Ovary (tissue), 10 donors: ENCODE measurements at regions of chr5 and their contacts with region 1.

Region 1: GRCh38 chr5:132820162-132820754 is 7.2 kb downstream of the SOWAHA start:
- DNase-seq: peak; percentile 80 to 90 (median 87)
- H3K4me3 ChIP-seq: no peak overlapping the region
- H3K27ac ChIP-seq: no peak overlapping the region
- H3K4me1 ChIP-seq: peaks cover 8% of the 10 kb centered on the region
- H3K27me3 ChIP-seq: no peaks in the 10 kb centered on the region
- CTCF ChIP-seq: peak; percentile 48 to 68 (median 65)
- EP300 ChIP-seq: no peak
- POLR2A ChIP-seq: no peak

Region 2: GRCh38 chr5:132777209-132778069 is 42.8 kb before region 1 on chr5 and contains the start of gene SEPTIN8:
- intact Hi-C with region 1: loop called in 1 of 4 experiments (anchors 5 kb)
- DNase-seq: peak; percentile 49 to 73 (median 68)
- H3K4me3 ChIP-seq: peak within 1 kb of the TSS; percentile 80
- H3K27ac ChIP-seq: peak within 1 kb of the TSS; percentile 67 to 78
- H3K4me1 ChIP-seq: peaks cover 5% of the 10 kb centered on the region
- H3K27me3 ChIP-seq: no peaks in the 10 kb centered on the region
- CTCF ChIP-seq: no peak
- EP300 ChIP-seq: no peak
- POLR2A ChIP-seq: no peak
- total RNA-seq, gene SEPTIN8: 18.7 to 54.5 (median 40.3) TPM